ENCODE measurements at regions of chr9 and their contacts with region 1.

Region 1: DNA sequence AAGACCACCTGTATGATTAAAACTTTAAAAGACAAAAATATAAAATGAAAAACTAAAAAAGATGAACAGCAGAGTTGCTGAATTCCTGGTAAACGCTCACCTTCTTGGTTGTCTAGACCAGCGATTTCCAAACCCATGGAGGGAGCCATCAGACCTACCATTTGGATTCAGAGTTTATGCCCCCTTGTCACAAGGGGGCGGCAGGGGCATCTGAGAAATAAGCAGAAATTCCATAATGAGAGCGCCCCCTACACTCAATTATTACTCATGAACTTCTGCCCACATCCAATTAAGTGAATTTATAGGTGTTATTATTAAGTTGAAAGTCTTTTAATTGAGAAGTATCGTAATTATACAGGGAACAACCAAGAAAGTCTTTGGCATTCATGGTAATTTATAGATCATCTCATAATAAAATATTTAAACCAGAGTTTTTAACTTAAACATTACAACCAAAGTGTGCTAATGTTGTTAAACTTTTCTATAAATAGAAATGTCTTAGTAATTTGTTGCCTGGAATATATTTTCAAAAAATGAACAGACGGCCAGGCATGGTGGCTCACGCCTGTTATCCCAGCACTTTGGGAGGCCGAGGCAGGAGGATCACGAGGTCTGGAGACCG is 35.2 kb upstream of the SPATA31C2 start:
- DNase-seq: peak; percentile 67
- ATAC-seq: peak; percentile 55
- H3K4me3 Mint-ChIP-seq: no peak overlapping the region
- H3K27ac Mint-ChIP-seq: no peak overlapping the region
- H3K4me1 Mint-ChIP-seq: peaks cover under 1% of the 10 kb centered on the region
- H3K27me3 Mint-ChIP-seq: peaks cover 4% of the 10 kb centered on the region

Region 2: DNA sequence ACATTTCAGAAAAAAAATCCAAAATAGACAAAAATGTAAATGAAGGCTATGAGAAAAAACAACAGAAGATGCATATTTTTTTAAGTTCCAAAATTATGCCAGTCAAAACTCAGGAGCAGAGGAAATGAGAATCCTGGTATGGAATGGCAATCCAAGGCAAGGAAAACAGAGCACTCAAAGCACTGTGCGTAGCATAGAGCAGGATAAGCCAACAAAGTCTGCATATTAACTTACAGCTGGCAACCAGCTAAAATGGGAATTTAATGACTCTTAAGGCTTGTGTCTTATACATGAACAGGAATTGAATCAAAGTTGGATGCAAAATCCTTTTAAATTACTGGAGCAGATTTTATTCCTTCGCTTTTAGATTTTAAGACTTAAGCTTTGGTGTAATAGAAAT is 879.4 kb before region 1 on chr9:
- CTCF ChIA-PET with region 1: no interaction called
- POLR2A ChIA-PET with region 1: no interaction called
- intact Hi-C with region 1: no loop called
- DNase-seq: no peak
- ATAC-seq: no peak
- H3K4me3 Mint-ChIP-seq: no peak overlapping the region
- H3K27ac Mint-ChIP-seq: no peak overlapping the region
- H3K4me1 Mint-ChIP-seq: no peaks in the 10 kb centered on the region
- H3K27me3 Mint-ChIP-seq: peaks cover 14% of the 10 kb centered on the region

Region 3: GRCh38 chr9:88578121-88579054 is 404.9 kb after region 1 on chr9:
- CTCF ChIA-PET with region 1: no interaction called
- POLR2A ChIA-PET with region 1: no interaction called
- intact Hi-C with region 1: loop called (anchors 1 kb)
- DNase-seq: peak; percentile 84
- ATAC-seq: peak; percentile 73
- H3K4me3 Mint-ChIP-seq: peak overlapping the region; percentile 31
- H3K27ac Mint-ChIP-seq: no peak overlapping the region
- H3K4me1 Mint-ChIP-seq: no peaks in the 10 kb centered on the region
- H3K27me3 Mint-ChIP-seq: peaks cover 13% of the 10 kb centered on the region

Region 4: GRCh38 chr9:88593537-88594185 is 420.2 kb after region 1 on chr9:
- CTCF ChIA-PET with region 1: no interaction called
- POLR2A ChIA-PET with region 1: no interaction called
- intact Hi-C with region 1: loop called in 1 of 2 experiments (anchors 5 kb)
- DNase-seq: peak; percentile 71
- ATAC-seq: peak; percentile 66
- H3K4me3 Mint-ChIP-seq: no peak overlapping the region
- H3K27ac Mint-ChIP-seq: no peak overlapping the region
- H3K4me1 Mint-ChIP-seq: peaks cover 6% of the 10 kb centered on the region
- H3K27me3 Mint-ChIP-seq: peaks cover 13% of the 10 kb centered on the region

Measured in activated CD4-positive, alpha-beta T cell treated with anti-CD3 and anti-CD28 coated beads for 36 hours (primary cell).